PC-9 (cell line): ENCODE measurements at regions of chr19 and their contacts with region 1.

Region 1: DNA sequence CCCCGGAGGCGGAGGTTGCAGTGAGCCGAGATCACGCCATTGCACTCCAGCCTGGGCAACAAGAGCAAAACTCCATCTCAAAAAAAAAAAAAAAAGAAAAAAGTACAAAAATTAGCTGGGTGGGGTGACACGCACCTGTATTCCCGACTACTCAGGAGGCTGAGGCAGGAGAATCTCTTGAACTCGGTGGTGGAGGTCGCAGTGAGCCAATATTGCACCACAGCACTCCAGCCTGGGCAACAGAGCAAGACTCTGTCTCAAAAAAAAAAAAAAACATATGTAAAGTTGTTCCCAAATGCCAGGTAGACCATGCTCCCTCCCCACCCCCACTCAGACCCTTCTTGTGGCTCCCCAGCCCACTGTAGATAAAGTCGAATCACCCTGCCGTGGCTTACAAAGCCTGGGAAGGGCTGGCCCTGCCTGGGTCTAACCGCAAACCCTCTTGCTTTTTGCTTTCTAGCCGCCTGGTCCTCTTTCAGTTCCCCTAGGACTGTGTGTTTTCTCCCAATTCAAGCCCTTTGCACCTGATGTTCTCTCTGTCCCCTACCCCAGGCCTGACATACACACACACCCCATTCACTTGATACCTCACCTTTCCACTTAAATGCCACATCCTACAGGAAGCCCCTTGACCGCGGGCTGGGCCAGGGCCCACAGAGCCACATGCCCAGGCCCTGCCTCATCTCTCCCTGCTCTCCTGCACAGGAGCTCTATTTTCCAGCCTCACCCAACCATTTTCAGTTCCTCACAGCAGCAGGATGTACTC is 34.4 kb downstream of the MAP4K1 start:
- DNase-seq: no peak
- H3K4me3 ChIP-seq: no peak overlapping the region
- H3K27ac ChIP-seq: no peak overlapping the region
- H3K4me1 ChIP-seq: peaks cover 10% of the 10 kb centered on the region
- H3K27me3 ChIP-seq: no peaks in the 10 kb centered on the region
- CTCF ChIP-seq: no peak

Region 2: DNA sequence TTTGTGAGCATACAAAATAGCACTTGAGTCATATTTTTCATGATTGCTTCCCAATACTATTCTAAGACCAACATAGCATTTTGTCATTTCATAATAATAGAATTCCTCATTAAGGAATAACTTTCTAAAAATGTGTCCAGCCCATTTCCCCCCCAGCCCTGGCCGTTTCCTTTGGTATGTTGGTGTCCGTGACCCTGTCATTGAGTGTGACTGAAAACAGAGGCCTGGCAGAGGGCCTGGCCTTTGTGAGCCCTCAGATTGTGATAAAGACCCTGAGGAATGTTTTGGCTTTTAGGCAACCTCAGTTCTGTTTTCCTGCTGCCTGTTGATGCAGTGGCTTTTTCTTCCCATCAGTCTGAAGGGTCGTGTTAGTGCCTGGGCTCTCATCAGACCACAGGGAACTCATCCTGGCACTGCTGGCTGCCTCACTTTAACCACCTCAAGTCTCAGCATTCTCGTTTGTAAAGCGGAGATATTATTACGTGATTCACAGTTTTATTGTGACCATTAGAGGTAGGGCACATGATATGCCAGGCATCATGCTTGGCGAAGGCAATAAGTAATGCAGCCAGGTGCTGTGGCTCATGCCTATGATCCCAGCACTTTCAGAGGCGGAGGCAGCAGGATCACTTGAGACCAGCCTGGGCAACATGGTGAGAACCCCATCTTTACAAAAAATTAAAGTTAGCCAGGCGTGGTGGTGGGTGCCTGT is 305.3 kb before region 1 on chr19:
- CTCF ChIA-PET with region 1: no interaction called
- POLR2A ChIA-PET with region 1: interaction called, 24 read pairs
- intact Hi-C with region 1: no loop called
- DNase-seq: peak; percentile 38 to 78
- H3K4me3 ChIP-seq: peak overlapping the region; percentile 39
- H3K27ac ChIP-seq: peak overlapping the region; percentile 75
- H3K4me1 ChIP-seq: peaks cover 64% of the 10 kb centered on the region
- H3K27me3 ChIP-seq: no peaks in the 10 kb centered on the region
- CTCF ChIP-seq: no peak

Region 3: GRCh38 chr19:38569368-38569983 is 13.9 kb before region 1 on chr19:
- CTCF ChIA-PET with region 1: interaction called, 4 read pairs
- POLR2A ChIA-PET with region 1: interaction called, 30 read pairs
- intact Hi-C with region 1: no loop called
- DNase-seq: no peak
- H3K4me3 ChIP-seq: no peak overlapping the region
- H3K27ac ChIP-seq: no peak overlapping the region
- H3K4me1 ChIP-seq: no peaks in the 10 kb centered on the region
- H3K27me3 ChIP-seq: no peaks in the 10 kb centered on the region; the same call in 1 of the 2 replicates
- CTCF ChIP-seq: no peak

Region 4: GRCh38 chr19:38596057-38596981 is 12.9 kb after region 1 on chr19:
- CTCF ChIA-PET with region 1: interaction called, 15 read pairs
- POLR2A ChIA-PET with region 1: no interaction called
- intact Hi-C with region 1: no loop called
- DNase-seq: peak; percentile 68 to 85
- H3K4me3 ChIP-seq: peak overlapping the region; percentile 60; the same call in 1 of the 2 replicates
- H3K27ac ChIP-seq: no peak overlapping the region
- H3K4me1 ChIP-seq: 0 out of 2 replicates have a peak, but pooled peaks cover 3% of the 10 kb centered on the region
- H3K27me3 ChIP-seq: no peaks in the 10 kb centered on the region
- CTCF ChIP-seq: no peak